Heart left ventricle (tissue), 16 donors: ENCODE measurements at regions of chr11 and their contacts with region 1.

Region 1: DNA sequence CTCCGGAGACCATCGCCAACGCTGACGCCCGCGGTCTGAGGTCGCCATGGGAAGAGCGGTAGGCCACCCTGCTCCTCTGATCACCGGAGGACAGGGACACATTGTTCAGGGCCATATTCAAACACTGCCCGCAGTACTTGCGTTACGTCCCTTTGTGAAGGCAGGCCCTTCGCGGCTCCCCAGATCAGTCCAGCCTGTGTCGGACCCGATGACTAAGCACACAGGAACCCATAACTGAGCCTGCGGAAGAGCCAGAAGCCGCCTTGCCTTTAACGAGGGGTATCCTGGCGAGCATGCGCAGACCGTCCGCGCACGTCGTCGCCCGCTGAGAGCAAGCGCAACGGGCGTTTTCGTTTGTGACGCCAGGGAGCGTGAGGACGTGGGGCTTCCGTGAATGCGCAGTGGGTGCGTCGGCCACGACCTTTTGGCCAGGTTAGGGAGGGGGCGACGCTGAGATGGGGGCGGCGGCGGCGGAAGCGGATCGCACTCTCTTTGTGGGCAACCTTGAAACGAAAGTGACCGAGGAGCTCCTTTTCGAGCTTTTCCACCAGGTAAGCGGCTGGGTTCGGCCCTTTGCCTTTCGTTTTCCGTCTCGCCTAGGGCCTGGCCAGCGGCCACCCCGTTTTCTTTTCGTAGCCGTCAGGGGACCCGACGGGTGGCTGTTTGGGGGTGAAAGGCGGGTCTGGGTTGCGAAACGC is at the starts of genes C11orf71 and RBM7:
- DNase-seq: peak; percentile 98 to 100 (median 99)
- ATAC-seq: peak; percentile 97 to 99 (median 98)
- H3K4me3 ChIP-seq: peak within 1 kb of the TSS; percentile 63 to 94 (median 76)
- H3K27ac ChIP-seq: peak within 1 kb of the TSS; percentile 89 to 100 (median 98)
- H3K4me1 ChIP-seq: peaks cover 0 to 69% (median 53%) of the 10 kb centered on the region in 12 donors
- H3K27me3 ChIP-seq: no peaks in the 10 kb centered on the region
- CTCF ChIP-seq: peak in 2 of 12 donors; percentile 12 to 13
- POLR2A ChIP-seq: peak in 1 of 2 donors; percentile 92
- total RNA-seq, gene C11orf71: 5.1 to 13.4 (median 8.6) TPM
- total RNA-seq, gene RBM7: 8.8 to 28.7 (median 20.8) TPM

Region 2: GRCh38 chr11:114295676-114296604 is 104.4 kb before region 1 on chr11 and contains the start of gene NNMT:
- intact Hi-C with region 1: loop called in 3 of 10 experiments (anchors 2 to 10 kb)
- DNase-seq: peak in 4 of 5 donors; percentile 68 to 81 (median 71)
- ATAC-seq: peak; percentile 75 to 87 (median 81)
- H3K4me3 ChIP-seq: peak within 1 kb of the TSS; percentile 7 to 71 (median 48)
- H3K27ac ChIP-seq: peak within 1 kb of the TSS; percentile 69 to 98 (median 86)
- H3K4me1 ChIP-seq: peaks cover 0 to 53% (median 23%) of the 10 kb centered on the region in 12 donors
- H3K27me3 ChIP-seq: no peaks in the 10 kb centered on the region
- CTCF ChIP-seq: no peak
- POLR2A ChIP-seq: peak in 1 of 2 donors; percentile 37
- total RNA-seq, gene NNMT: 12.4 to 146 (median 27.4) TPM

Region 3: DNA sequence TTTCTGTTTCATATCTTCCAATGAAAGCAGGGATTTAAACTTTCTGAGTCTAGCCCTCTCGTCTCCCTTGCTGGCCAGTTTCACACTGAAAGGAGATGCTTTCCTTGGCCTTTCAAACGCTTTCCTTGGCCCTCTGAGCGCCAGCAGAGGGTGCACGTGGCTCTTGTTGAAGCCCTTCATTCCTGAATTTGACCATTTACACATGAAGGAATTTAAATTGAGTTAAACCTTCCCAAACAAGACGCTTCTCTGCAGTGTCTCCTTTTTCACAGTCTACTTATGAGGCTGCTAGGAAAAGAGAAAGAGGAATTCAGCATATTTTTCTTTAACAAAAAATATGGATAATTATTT is 82.6 kb before region 1 on chr11:
- intact Hi-C with region 1: no loop called
- DNase-seq: peak in 3 of 5 donors; percentile 29 to 60 (median 32)
- ATAC-seq: peak in 3 of 4 donors; percentile 38 to 65 (median 59)
- H3K4me3 ChIP-seq: no peak overlapping the region
- H3K27ac ChIP-seq: peak overlapping the region in 10 of 12 donors; percentile 8 to 72 (median 40)
- H3K4me1 ChIP-seq: peaks cover 0 to 34% (median 14%) of the 10 kb centered on the region in 12 donors
- H3K27me3 ChIP-seq: peaks cover 0 to 4% (median 0%) of the 10 kb centered on the region in 9 donors
- CTCF ChIP-seq: peak in 10 of 12 donors; percentile 11 to 69 (median 46)
- POLR2A ChIP-seq: no peak

Region 4: GRCh38 chr11:114348200-114349191 is 51.9 kb before region 1 on chr11:
- intact Hi-C with region 1: loop called in 5 of 10 experiments (anchors 1 to 10 kb)
- DNase-seq: peak in 2 of 5 donors; percentile 25 to 34
- ATAC-seq: peak in 3 of 4 donors; percentile 69 to 77 (median 72)
- H3K4me3 ChIP-seq: no peak overlapping the region
- H3K27ac ChIP-seq: no peak overlapping the region
- H3K4me1 ChIP-seq: peaks cover 0 to 3% (median 0%) of the 10 kb centered on the region in 12 donors
- H3K27me3 ChIP-seq: no peaks in the 10 kb centered on the region
- CTCF ChIP-seq: peak; percentile 41 to 73 (median 57)
- POLR2A ChIP-seq: no peak

Region 5: DNA sequence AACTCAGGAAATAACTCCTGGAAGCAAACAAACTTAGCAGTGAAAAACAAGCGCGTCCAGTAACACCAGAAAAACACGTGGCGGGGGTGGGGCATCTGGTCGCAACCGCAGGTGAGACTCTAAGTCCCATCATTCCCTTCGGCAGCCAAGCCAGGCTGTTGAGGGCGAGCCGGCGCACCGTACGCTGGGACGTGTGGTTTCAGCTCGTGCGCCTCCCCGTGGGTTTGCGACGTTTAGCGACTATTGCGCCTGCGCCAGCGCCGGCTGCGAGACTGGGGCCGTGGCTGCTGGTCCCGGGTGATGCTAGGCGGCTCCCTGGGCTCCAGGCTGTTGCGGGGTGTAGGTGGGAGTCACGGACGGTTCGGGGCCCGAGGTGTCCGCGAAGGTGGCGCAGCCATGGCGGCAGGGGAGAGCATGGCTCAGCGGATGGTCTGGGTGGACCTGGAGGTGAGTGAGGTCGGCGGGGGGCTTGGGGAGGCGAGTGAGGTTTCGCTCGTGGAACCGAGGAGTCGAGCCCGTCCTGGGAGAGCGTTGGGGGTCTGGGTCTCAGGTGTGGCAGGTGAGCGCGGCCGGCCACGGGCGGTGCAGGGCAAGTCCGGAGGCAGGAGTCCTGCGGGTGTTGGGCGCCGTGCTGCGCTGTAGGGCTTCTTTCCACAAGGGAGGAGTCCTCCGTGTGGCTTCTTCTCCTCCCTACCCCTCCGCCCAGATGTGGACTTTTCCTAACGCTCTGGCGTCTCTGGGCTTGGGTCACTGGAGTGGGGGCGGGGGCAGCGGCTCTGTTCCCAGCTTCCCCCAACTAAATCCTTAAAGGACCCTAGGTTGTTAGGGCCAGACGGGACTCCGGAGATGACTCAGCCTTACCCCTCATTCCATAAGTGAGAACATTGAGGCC is 39.1 kb after region 1 on chr11 and contains the start of gene REXO2:
- intact Hi-C with region 1: loop called (anchors 1 to 5 kb)
- DNase-seq: peak; percentile 95 to 98 (median 97)
- ATAC-seq: peak; percentile 98 to 99 (median 98)
- H3K4me3 ChIP-seq: peak within 1 kb of the TSS; percentile 66 to 96 (median 88)
- H3K27ac ChIP-seq: peak within 1 kb of the TSS; percentile 35 to 95 (median 88)
- H3K4me1 ChIP-seq: peaks cover 0 to 43% (median 21%) of the 10 kb centered on the region in 12 donors
- H3K27me3 ChIP-seq: no peaks in the 10 kb centered on the region
- CTCF ChIP-seq: peak in 8 of 12 donors; percentile 9 to 62 (median 28)
- POLR2A ChIP-seq: peak in 1 of 2 donors; percentile 85
- total RNA-seq, gene REXO2: 158 to 235 (median 195) TPM